Ascending aorta (tissue), 2 donors: ENCODE measurements at regions of chr20 and their contacts with region 1.

Region 1: DNA sequence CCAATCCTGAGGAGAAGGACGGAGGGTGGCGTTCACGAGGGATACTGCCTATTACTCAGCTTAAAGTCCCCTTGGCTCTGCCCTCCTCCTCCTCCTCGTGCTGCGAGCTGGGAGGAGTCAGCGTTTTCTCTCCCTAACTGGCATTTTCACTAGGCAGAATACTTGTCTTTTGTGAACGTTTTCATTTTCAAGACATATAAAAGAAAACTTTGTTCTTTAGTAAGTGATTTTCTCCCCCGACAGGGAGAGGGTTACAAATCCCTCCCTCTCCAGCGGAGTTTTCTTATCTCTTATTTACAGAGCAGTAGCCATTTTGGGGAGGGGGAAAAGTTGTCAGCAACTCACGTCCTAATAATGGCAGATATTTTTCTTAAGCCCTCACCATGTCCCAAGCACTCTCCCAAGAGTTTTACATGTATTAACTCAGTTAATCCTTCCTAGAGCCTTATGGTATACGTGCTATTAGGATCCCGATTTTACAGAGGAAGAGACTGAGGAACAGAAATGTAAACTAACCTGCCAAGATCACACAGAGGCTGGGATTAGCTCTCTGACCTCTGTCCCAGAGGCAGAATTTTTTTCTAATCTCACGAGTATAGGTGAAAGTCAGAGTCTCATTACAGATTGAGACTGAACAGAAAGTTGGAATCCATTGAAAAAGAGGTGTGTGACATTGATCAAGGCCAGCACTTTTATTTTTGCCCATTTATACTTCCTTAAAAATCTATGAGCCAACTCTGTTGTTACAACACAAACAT is 30.0 kb upstream of the ZNF217 start:
- DNase-seq: peak; percentile 27 to 86
- H3K4me3 ChIP-seq: peak overlapping the region; percentile 46 to 53
- H3K27ac ChIP-seq: peak overlapping the region; percentile 86 to 94
- H3K4me1 ChIP-seq: peaks cover 12 to 22% of the 10 kb centered on the region in 2 donors
- H3K27me3 ChIP-seq: no peaks in the 10 kb centered on the region
- CTCF ChIP-seq: no peak

Region 2: DNA sequence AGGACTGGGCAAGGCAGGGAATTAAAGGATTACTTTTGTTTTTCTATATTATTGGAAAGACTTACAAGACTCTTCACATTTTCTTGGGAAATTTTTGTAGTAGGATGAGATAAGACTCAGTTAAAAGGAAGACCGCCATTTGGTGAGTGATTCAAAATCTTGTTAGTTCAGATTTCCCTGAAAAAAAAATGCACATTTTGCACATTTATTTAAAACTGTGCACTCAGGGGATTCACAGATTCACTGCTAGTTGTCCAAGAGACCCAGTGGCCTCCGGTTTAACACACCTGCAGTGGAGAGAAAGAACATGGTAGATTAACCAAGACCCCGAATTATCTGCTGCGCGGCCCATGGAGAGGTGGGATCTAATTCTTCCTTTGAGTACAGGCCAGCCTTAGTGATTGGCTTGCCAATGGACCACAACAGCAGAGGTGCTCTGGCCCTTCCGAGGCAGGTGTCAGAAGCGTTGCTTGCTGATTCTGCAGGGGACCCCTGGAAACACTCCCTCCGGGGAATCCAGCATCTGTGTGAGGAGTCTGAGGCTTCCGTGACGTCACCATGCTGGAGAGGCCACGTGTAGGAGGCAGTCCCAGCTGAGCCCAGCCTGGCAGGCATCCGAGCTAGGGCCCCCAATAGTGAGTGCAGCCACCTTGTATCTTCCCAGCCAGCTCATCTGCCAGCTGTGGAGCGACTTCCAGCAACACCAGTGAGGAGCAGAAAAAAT is 98.9 kb before region 1 on chr20:
- intact Hi-C with region 1: no loop called
- DNase-seq: no peak
- H3K4me3 ChIP-seq: no peak overlapping the region
- H3K27ac ChIP-seq: no peak overlapping the region
- H3K4me1 ChIP-seq: no peaks in the 10 kb centered on the region
- H3K27me3 ChIP-seq: no peaks in the 10 kb centered on the region
- CTCF ChIP-seq: no peak

Region 3: DNA sequence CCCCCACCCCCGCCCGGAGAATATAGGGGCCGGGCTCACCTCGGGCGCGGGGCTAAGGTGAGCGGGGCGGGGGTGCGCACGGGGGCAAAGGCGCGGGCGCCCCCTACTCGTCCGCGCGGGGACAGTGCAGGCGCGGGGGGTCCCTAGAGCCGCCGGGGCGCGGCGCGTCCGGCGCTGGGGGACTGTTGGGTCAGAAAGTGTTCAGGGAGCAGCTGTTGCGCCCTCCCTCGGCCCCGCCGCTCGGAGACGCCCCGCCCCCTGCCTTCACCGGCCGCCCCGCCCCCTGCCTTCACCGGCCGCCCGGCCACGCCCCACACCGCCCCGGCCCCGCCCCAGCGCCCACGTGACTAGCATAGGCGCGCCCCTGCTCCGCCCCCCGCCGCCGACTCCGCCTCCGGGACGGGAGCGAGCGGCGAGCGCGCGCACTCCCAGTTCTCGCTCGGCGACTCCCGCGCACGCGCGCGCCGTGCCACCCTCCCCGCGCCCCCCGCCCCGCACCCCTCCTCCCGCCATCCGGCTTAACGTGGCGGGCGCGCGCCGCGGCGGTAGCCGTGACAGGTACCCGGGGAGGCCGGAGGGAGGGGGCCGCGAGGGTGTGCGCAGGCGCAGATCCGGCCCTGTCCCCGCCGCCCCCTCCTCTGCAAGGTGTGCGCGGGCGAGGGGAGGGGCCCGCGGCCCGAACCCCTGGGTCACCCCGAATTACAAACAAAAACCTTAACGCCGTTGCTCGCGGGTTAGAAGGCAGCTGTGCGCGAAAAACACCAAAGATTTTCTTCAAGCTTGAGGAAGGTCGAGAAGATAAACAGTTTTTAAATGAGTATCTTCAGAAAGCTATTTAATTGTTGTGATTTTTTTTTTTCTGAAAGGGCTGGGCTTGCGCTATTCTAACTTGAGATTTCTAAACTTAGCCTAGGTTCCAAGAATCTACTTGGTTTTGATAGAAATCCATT is 29.3 kb before region 1 on chr20:
- intact Hi-C with region 1: loop called (anchors 1 kb)
- DNase-seq: peak; percentile 64 to 98
- H3K4me3 ChIP-seq: peak overlapping the region; percentile 92 to 98
- H3K27ac ChIP-seq: peak overlapping the region; percentile 95 to 99
- H3K4me1 ChIP-seq: peaks cover 0 to 13% of the 10 kb centered on the region in 2 donors
- H3K27me3 ChIP-seq: no peaks in the 10 kb centered on the region
- CTCF ChIP-seq: no peak

Region 4: GRCh38 chr20:53611449-53611894 is 12.2 kb before region 1 on chr20:
- intact Hi-C with region 1: loop called (anchors 1 kb)
- DNase-seq: peak in 1 of 2 donors; percentile 75
- H3K4me3 ChIP-seq: no peak overlapping the region
- H3K27ac ChIP-seq: peak overlapping the region; percentile 22 to 76
- H3K4me1 ChIP-seq: peaks cover 0 to 13% of the 10 kb centered on the region in 2 donors
- H3K27me3 ChIP-seq: no peaks in the 10 kb centered on the region
- CTCF ChIP-seq: no peak

Region 5: GRCh38 chr20:53656293-53657202 is 32.9 kb after region 1 on chr20:
- intact Hi-C with region 1: loop called (anchors 5 kb)
- DNase-seq: peak in 1 of 2 donors; percentile 15
- H3K4me3 ChIP-seq: no peak overlapping the region
- H3K27ac ChIP-seq: peak overlapping the region in 1 of 2 donors; percentile 11
- H3K4me1 ChIP-seq: peaks cover 3 to 15% of the 10 kb centered on the region in 2 donors
- H3K27me3 ChIP-seq: no peaks in the 10 kb centered on the region
- CTCF ChIP-seq: no peak

Region 6: DNA sequence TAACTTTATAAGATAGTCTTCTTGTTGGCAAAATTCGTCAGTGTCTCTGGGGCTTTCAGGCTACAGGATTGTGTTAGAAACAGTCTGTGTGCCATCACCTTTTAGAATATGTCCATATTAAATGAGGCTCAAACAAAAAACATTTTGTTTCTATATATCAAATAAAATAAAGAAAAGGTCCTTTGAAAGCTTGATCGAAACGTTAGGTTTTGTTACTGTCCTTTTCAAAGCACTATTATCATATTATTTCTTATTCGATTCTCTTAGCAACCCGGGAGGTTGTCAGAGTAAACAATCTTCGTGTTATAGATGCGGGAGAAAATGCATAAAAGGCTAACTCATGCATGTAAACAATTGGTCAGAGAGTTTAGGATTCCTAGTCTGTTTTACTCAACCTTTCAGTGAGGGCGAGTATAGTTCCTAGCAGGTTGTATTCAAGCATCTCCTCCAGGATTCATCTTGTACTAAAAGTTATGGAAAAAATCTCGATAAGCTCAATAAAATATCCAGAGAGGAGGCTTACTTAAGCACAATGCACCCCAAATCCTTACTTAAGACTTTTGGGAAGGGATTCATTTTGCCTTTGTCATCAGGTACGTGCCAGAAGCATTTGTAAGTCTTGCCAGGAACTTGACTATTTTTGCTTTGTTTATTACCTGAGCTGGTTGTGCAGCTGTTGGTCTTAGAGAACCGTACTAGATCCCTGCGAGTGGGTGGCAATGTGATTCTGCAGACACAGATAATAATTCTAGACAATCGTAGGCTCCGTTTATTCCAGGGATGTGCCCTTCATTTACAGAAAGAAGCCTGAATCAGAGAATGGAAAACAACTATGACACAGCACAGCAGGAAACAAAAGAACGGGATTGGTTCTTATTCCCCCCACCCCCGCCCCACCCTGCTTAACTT is 129.6 kb after region 1 on chr20:
- intact Hi-C with region 1: no loop called
- DNase-seq: no peak
- H3K4me3 ChIP-seq: no peak overlapping the region
- H3K27ac ChIP-seq: no peak overlapping the region
- H3K4me1 ChIP-seq: peaks cover 0 to 3% of the 10 kb centered on the region in 2 donors
- H3K27me3 ChIP-seq: no peaks in the 10 kb centered on the region
- CTCF ChIP-seq: no peak